ENCODE measurements at regions of chr14 and their contacts with region 1.

Region 1: DNA sequence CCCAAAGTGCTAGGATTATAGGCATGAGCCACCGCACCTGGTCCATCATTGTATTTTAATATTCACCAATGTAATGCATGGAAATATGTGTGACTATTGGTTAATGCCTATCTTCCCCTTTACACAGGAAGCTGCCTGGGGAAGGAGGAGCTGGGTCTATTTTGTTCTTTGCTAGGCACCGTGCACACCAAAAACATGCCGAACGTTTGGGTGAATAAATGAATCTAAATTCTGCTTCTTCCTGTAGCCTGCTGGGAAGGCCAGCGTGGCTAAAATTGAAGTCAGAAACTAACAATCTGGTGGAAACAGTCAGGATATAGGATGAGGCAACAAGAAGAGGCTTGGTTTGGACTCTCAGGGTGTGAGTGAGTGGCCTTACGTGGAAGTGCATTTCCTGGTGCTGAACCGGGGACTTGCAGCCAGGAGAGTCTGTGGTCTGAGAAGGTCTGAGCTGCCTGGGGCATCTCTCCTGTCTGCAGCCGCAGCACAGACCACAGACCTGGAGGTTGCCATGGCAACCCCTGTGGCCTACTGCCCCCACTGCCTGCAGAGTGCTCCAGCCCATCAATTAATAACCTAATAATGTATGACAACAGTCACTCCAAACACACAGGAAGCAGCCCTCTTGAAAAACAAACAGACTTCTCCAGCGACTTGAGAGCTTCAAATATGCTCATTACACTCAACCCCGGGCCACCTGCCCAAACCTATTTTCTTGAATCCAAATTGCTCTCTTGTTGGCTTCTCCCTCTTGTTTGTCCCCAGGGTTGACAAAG is 5.5 kb upstream of the GPR68 start:
- DNase-seq: no peak
- ATAC-seq: peak; percentile 64
- H3K4me3 Mint-ChIP-seq: peak overlapping the region; percentile 62
- H3K27ac Mint-ChIP-seq: peak overlapping the region; percentile 90
- H3K4me1 Mint-ChIP-seq: peaks cover 45% of the 10 kb centered on the region
- H3K27me3 Mint-ChIP-seq: no peaks in the 10 kb centered on the region
- CTCF ChIP-seq: no peak

Region 2: GRCh38 chr14:91047174-91047753 is 202.8 kb before region 1 on chr14:
- CTCF ChIA-PET with region 1: no interaction called
- POLR2A ChIA-PET with region 1: no interaction called
- intact Hi-C with region 1: no loop called
- DNase-seq: no peak
- ATAC-seq: peak; percentile 21
- H3K4me3 Mint-ChIP-seq: peak overlapping the region; percentile 47
- H3K27ac Mint-ChIP-seq: peak overlapping the region; percentile 42
- H3K4me1 Mint-ChIP-seq: peaks cover 47% of the 10 kb centered on the region
- H3K27me3 Mint-ChIP-seq: no peaks in the 10 kb centered on the region
- CTCF ChIP-seq: no peak

Region 3: DNA sequence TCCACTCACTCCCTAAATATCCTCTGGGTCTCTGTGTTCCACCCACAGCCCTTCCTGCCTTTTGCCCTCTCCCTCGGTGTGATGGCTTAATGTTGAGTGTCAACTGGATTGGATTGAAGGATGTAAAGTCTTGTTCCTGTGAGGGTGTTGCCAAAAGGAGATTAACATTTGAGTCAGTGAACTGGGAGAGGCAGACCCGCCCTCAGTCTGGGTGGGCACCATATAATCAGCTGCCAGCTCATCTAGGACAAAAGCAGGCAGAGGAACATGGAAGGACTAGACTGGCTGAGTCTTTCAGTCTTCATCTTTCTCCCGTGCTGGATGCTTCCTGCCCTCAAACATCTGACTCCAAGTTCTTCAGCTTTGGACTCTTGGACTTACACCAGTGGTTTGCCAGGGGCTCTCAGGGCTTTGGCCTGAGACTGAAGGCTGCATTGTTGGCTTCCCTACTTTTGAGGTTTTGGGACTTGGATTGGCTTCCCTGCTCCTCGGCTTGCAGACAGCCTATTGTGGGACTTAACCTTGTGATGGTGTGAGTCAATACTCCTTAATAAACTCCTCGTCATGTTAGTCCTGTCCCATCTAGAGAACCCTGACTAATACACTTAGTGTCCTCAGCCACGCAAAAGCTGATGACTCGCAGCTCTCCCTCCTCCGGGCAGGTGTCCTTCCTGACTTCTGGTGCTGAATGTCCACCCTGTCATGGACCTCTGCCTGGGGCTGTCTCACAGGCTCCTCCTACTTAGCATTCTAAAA is 130.3 kb before region 1 on chr14:
- CTCF ChIA-PET with region 1: no interaction called
- POLR2A ChIA-PET with region 1: no interaction called
- intact Hi-C with region 1: no loop called
- DNase-seq: no peak
- ATAC-seq: no peak
- H3K4me3 Mint-ChIP-seq: no peak overlapping the region
- H3K27ac Mint-ChIP-seq: no peak overlapping the region
- H3K4me1 Mint-ChIP-seq: peaks cover 73% of the 10 kb centered on the region
- H3K27me3 Mint-ChIP-seq: no peaks in the 10 kb centered on the region
- CTCF ChIP-seq: no peak

Region 4: DNA sequence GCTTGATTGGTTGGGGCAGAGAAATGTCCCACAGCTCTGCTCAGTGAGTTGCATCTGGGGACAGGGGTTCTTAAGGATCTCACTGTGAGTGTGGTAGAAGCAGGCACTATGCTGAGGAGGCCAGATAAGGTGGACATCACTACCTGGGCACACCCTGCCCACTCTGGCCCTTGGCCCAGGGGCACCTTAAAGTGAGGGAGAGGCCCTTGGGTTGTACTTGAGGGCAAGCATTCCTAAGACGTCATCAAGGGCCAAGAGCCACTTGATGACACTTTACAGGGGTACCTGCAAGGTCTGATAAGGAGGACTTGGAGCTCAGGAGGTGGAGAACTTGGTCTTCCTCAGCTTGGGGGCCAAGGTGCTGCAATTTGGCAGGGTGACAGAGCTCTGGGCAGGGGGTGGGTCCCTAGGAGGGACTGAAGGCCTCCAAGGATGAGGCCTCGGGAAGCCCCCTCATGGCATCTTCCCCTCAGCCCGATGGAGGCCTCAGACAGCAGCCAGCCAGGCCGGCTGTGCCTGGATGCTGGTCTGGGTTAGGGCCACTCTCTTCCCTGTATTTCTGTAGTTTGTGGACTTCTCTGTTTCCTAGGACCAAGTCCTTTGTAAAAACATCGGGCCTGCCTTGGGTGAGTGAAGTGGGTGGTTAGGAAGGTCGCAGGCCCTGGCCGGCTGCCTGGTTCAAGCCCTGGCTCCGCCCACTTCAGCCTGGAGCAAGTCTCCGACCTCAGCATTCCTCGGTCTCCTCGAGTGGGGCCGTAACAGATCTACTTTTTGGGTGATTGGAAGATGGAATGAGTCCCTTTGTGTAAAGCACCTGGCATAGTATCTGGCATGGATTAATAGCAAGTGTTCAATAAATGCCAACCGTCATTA is 30.3 kb before region 1 on chr14:
- CTCF ChIA-PET with region 1: no interaction called
- POLR2A ChIA-PET with region 1: no interaction called
- intact Hi-C with region 1: loop called (anchors 5 kb)
- DNase-seq: no peak
- ATAC-seq: no peak
- H3K4me3 Mint-ChIP-seq: no peak overlapping the region
- H3K27ac Mint-ChIP-seq: no peak overlapping the region
- H3K4me1 Mint-ChIP-seq: peaks cover 5% of the 10 kb centered on the region
- H3K27me3 Mint-ChIP-seq: no peaks in the 10 kb centered on the region
- CTCF ChIP-seq: no peak

Region 5: DNA sequence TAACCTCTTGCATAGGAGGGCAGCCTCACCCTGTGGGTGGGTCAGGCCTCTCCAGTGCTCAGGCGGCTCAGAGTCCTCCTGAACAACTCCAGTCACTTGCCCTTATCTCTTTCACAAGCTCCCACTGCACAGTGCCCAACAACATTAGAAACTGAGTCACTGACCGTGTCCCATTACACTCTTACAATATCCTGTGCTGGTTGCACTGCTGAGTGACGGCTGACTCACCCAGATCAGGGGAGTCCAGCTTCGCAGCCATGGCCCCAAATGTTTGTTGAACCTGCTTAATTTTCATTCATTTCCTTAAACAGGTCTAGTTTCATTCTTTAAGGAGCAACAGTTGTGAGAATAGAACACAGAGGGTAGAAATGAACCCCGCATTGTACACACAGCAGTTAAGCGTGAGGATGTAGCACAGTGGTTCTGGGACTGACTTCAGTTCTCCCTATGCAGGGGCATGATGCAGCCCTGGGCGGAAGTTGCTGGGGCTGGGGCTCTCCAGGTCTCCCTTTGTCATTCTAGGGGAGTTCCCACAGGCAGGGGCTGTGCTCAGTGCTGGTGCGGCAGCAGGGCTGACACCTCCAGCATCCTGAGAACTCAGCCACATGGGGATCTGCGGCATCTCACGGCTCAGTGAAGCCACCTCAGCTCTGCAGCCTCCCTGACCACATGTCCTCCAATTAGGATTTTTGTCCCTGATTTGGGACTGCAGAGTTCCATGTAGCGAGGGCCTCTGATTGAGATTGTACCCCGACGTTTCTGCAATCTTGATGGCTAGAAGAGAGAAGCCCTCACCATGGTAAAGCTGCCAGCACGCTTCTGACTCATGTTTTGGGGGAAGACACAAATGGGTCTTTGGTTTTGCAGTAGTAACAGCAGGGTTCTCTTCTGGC is 21.7 kb before region 1 on chr14:
- CTCF ChIA-PET with region 1: interaction called, 4 read pairs
- POLR2A ChIA-PET with region 1: interaction called, 101 read pairs
- intact Hi-C with region 1: loop called (anchors 1 kb)
- DNase-seq: peak; percentile 53
- ATAC-seq: peak; percentile 88
- H3K4me3 Mint-ChIP-seq: peak overlapping the region; percentile 63
- H3K27ac Mint-ChIP-seq: peak overlapping the region; percentile 89
- H3K4me1 Mint-ChIP-seq: peaks cover 71% of the 10 kb centered on the region
- H3K27me3 Mint-ChIP-seq: no peaks in the 10 kb centered on the region
- CTCF ChIP-seq: no peak

Region 6: DNA sequence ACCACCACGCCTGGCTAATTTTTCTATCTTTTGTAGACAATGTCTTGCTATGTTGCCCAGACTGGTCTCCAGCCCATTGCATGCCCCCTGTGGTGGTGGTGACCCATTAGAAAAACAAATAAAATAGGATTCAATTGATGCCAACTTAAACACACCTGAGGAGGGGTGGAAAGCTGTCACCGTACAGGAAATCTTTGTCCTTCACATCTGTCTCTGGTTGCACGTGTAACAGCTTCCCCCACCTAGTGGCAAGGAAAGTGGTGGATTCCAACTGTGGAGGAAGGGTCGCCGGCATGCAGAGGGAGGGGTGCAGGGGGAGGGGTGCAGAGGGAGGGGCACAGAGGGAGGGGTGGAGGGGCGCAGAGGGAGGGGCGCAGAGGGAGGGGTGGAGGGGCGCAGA is 20.6 kb after region 1 on chr14:
- CTCF ChIA-PET with region 1: no interaction called
- POLR2A ChIA-PET with region 1: no interaction called
- intact Hi-C with region 1: no loop called
- DNase-seq: no peak
- ATAC-seq: no peak
- H3K4me3 Mint-ChIP-seq: no peak overlapping the region
- H3K27ac Mint-ChIP-seq: no peak overlapping the region
- H3K4me1 Mint-ChIP-seq: peaks cover 3% of the 10 kb centered on the region
- H3K27me3 Mint-ChIP-seq: no peaks in the 10 kb centered on the region
- CTCF ChIP-seq: no peak

Region 7: GRCh38 chr14:91281346-91281745 is 31.3 kb after region 1 on chr14:
- CTCF ChIA-PET with region 1: interaction called, 21 read pairs
- POLR2A ChIA-PET with region 1: interaction called, 14 read pairs
- intact Hi-C with region 1: loop called (anchors 2 kb)
- DNase-seq: no peak
- ATAC-seq: no peak
- H3K4me3 Mint-ChIP-seq: no peak overlapping the region
- H3K27ac Mint-ChIP-seq: no peak overlapping the region
- H3K4me1 Mint-ChIP-seq: peaks cover 21% of the 10 kb centered on the region
- H3K27me3 Mint-ChIP-seq: no peaks in the 10 kb centered on the region
- CTCF ChIP-seq: no peak

Region 8: DNA sequence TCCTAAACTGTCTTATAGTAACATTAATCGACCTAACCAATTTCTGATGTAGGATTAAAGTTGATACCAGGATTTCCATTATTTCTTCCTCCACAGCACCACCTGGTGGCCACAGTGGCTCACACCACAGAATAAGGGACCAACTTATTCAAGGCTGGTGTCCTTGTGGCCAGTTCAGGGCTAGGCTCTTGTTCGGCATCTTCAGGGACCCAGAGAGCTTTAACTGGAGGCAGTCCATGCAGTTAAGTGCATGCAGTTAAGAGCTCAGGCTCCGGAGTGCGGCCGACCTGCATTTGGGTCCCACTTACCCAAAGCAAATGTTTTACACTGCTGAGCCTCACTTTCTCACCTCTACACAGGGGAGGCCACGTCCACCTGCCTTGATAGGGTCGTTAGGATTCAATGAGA is 36.5 kb after region 1 on chr14:
- CTCF ChIA-PET with region 1: interaction called, 21 read pairs
- POLR2A ChIA-PET with region 1: no interaction called
- intact Hi-C with region 1: loop called (anchors 2 kb)
- DNase-seq: peak; percentile 64
- ATAC-seq: peak; percentile 88
- H3K4me3 Mint-ChIP-seq: no peak overlapping the region
- H3K27ac Mint-ChIP-seq: no peak overlapping the region
- H3K4me1 Mint-ChIP-seq: peaks cover 24% of the 10 kb centered on the region
- H3K27me3 Mint-ChIP-seq: no peaks in the 10 kb centered on the region
- CTCF ChIP-seq: peak; percentile 90